ENCODE measurements at regions of chr1 and their contacts with region 1.

Region 1: GRCh38 chr1:167533851-167534300 is 15.5 kb upstream of the CD247 start:
- DNase-seq: peak; percentile 47
- H3K4me3 ChIP-seq: no peak overlapping the region
- H3K27ac ChIP-seq: no peak overlapping the region
- H3K4me1 ChIP-seq: no peaks in the 10 kb centered on the region
- H3K27me3 ChIP-seq: peaks cover 0 to 2% of the 10 kb centered on the region in 2 experiments
- CTCF ChIP-seq: peak; percentile 84 to 87
- POLR2A ChIP-seq: no peak

Region 2: DNA sequence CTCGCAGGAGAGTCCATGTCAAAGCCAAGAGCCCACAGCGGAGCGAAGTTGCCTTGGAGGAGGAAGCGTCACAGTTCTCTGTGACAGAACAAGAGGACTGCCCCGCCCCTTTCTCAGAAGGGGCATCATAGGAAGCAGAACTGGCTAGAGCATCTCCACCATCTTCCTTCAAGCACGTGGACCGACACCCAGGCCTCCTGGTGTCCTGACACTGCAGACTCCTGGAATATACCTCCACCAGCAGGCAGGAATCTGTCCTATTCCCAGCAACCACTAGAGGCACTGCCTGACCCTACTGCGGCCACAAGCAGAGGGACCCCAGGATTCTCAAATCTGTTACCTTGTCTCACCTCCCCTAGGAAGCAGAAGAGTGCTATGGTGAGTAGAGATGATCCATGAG is 481.5 kb before region 1 on chr1:
- CTCF ChIA-PET with region 1: no interaction called
- POLR2A ChIA-PET with region 1: no interaction called
- dilution Hi-C with region 1: no loop called
- intact Hi-C with region 1: no loop called
- DNase-seq: no peak
- H3K4me3 ChIP-seq: no peak overlapping the region
- H3K27ac ChIP-seq: no peak overlapping the region
- H3K4me1 ChIP-seq: no peaks in the 10 kb centered on the region
- H3K27me3 ChIP-seq: no peaks in the 10 kb centered on the region
- CTCF ChIP-seq: peak; percentile 28 to 55
- POLR2A ChIP-seq: no peak

Region 3: DNA sequence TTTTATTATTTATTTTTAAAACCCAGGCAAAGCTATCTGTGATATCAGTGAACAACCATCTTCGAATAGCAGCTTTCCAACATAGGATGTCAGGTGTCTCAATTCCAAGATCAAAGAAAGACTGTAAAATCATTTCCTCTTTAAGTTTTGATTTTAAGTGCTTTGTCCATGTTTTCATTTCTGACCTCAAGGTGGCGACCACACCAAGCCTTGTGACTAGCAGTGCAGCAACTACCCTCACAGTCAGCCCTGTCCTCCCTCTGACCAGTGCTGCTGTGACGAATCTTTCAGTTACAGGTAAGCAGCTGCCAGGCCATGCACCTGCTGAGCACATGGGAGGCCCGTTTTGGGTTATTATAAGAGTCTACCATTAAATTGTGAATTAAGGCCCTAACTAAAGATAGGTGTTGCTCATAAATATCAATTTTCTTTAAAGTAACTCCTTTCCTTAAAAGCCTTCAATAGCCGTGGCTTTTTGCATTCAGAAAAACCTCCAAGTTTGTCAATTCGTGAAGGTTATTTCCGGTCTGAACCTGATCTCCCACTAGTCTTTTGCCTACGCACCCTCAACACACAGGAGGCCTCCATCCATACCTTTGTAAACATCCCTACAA is 132.5 kb before region 1 on chr1:
- CTCF ChIA-PET with region 1: interaction called, 4 read pairs
- POLR2A ChIA-PET with region 1: no interaction called
- dilution Hi-C with region 1: no loop called
- intact Hi-C with region 1: loop called (anchors 1 kb)
- DNase-seq: peak; percentile 61
- H3K4me3 ChIP-seq: no peak overlapping the region
- H3K27ac ChIP-seq: no peak overlapping the region
- H3K4me1 ChIP-seq: peaks cover 15% of the 10 kb centered on the region
- H3K27me3 ChIP-seq: no peaks in the 10 kb centered on the region
- CTCF ChIP-seq: peak; percentile 42 to 64
- POLR2A ChIP-seq: no peak

Region 4: DNA sequence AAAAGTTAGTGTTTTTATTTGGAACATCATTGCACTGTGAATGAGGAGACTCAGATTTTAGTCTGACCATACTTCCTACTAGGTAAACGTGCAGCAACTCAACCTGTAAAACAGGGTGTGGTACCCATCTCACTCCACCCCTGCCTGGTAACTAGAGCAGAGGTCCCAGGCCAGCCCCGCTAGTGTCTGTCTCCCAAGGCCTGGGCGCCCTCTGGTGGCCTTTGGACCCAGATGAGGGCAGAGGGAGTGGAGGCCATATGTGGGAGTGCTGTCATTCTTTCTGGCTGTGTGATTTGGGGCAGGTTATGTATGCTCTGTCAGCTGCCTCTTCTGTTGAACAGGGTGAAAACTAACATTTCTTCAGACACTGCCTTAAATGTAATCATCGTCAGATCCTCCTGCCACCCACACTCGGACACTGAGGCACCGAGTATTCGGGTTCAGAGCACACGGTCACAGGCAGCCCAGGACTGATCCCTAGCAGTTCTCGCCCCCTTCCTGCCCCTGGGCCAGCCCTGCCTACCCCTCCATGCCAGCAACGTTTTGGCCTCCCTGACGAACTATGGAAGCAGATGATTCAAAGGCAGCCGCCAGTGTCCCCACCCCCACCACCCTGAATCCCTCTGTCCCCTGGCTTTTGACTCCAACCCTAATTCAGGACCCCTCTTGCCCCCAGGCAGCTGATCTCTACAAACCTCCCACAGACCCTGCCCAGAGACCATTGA is 91.6 kb before region 1 on chr1:
- CTCF ChIA-PET with region 1: interaction called, 4 read pairs
- POLR2A ChIA-PET with region 1: no interaction called
- dilution Hi-C with region 1: no loop called
- intact Hi-C with region 1: loop called (anchors 1 kb)
- DNase-seq: peak; percentile 49
- H3K4me3 ChIP-seq: no peak overlapping the region
- H3K27ac ChIP-seq: no peak overlapping the region
- H3K4me1 ChIP-seq: no peaks in the 10 kb centered on the region
- H3K27me3 ChIP-seq: peaks cover 0 to 4% of the 10 kb centered on the region in 2 experiments
- CTCF ChIP-seq: peak; percentile 81 to 88
- POLR2A ChIP-seq: no peak

Region 5: GRCh38 chr1:167548059-167548932 is 14.4 kb after region 1 on chr1:
- CTCF ChIA-PET with region 1: interaction called, 28 read pairs
- POLR2A ChIA-PET with region 1: no interaction called
- dilution Hi-C with region 1: no loop called
- intact Hi-C with region 1: no loop called
- DNase-seq: no peak
- H3K4me3 ChIP-seq: no peak overlapping the region
- H3K27ac ChIP-seq: no peak overlapping the region
- H3K4me1 ChIP-seq: no peaks in the 10 kb centered on the region
- H3K27me3 ChIP-seq: peaks cover 0 to 2% of the 10 kb centered on the region in 2 experiments
- CTCF ChIP-seq: no peak
- POLR2A ChIP-seq: no peak

Region 6: GRCh38 chr1:167563579-167564246 is 29.8 kb after region 1 on chr1:
- CTCF ChIA-PET with region 1: interaction called, 10 read pairs
- POLR2A ChIA-PET with region 1: no interaction called
- dilution Hi-C with region 1: no loop called
- intact Hi-C with region 1: no loop called
- DNase-seq: no peak
- H3K4me3 ChIP-seq: no peak overlapping the region
- H3K27ac ChIP-seq: no peak overlapping the region
- H3K4me1 ChIP-seq: no peaks in the 10 kb centered on the region
- H3K27me3 ChIP-seq: peaks cover 0 to 2% of the 10 kb centered on the region in 2 experiments
- CTCF ChIP-seq: no peak
- POLR2A ChIP-seq: no peak

Measured in endothelial cell of umbilical vein (primary cell).